ENCODE measurements at regions of chr20 and their contacts with region 1.

Region 1: DNA sequence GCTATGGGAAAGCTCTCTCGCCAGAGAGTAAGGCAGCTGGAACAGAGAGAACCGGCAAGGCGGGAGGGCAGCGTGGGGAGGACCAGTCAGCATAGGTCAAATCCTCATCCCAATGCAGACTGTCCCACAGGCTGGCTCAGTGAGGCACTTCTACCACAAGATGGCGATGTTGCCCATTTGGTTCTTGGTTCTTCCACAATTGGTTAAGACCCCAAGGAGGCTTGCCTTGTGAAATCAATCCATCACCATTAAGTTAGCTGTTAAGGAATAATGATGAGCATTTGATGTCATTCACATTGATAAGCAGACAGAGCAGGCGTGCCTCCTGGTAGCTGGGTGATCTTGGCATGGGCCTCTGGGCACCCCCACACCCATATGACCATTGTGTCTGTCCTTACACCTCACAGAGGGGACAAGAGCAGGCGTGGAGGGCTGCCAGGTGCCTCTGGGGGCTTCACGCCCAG is 2.4 kb downstream of the CSTL1 start:
- DNase-seq: peak in 2 of 3 donors; percentile 52 to 78
- ATAC-seq: peak; percentile 71
- H3K4me3 ChIP-seq: no peak overlapping the region
- H3K4me1 ChIP-seq: no peaks in the 10 kb centered on the region
- CTCF ChIP-seq: peak; percentile 58

Region 2: DNA sequence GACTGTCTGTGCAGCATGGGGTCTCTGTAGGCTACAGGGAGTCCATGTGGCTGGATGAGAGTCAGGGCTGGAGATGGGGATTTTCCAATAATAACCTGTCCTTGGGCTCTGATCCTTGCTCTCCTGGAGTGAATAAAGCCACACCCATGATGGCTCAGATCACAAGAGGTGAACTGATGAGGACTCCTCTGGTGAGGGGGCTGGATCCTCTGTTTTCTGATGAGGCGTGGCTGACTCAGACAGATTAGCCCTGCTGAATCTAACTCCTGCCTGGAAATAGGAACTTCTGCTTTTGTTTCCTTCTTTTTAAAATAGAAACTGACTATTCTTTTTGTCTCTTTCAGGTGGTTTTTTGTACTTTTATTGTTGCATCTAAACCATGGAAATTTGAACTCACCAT is 99.4 kb after region 1 on chr20:
- intact Hi-C with region 1: no loop called
- DNase-seq: no peak
- ATAC-seq: no peak
- H3K4me3 ChIP-seq: no peak overlapping the region
- H3K4me1 ChIP-seq: no peaks in the 10 kb centered on the region
- CTCF ChIP-seq: no peak

Region 3: DNA sequence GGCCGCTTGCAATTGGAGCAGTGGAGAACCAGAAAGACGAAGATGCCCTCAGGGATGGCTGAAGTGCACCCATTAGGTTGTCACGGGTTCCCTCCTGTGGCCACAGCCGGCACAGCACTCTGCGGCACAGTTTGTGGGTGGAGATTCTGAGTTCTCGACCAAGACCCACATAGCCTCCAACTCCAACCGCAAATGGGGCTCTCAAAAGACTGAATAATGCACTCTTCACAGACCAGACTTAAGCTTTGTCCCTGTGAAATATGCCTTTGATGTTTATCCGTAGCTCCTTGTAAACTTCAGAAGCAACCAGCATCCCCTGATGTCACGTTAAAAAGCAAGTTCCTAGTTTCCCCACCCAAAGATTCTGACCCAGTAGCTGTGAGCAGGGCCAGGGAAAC is 164.8 kb after region 1 on chr20:
- intact Hi-C with region 1: loop called in 1 of 2 experiments (anchors 10 kb)
- DNase-seq: peak; percentile 57 to 84 (median 82)
- ATAC-seq: peak; percentile 89
- H3K4me3 ChIP-seq: no peak overlapping the region
- H3K4me1 ChIP-seq: no peaks in the 10 kb centered on the region
- CTCF ChIP-seq: peak; percentile 78